ENCODE measurements at regions of chr2 and their contacts with region 1.

Region 1: GRCh38 chr2:142097711-142098110 is 33.1 kb downstream of the LRP1B start:
- DNase-seq: no peak
- ATAC-seq: no peak
- H3K4me3 ChIP-seq: no peak overlapping the region
- H3K27ac ChIP-seq: no peak overlapping the region
- H3K4me1 ChIP-seq: no peaks in the 10 kb centered on the region; a peak in 1 of 4 replicates
- H3K27me3 ChIP-seq: no peaks in the 10 kb centered on the region
- CTCF ChIP-seq: no peak
- POLR2A ChIP-seq: no peak
- RAD21 ChIP-seq: no peak

Region 2: GRCh38 chr2:141899740-141900139 is 198.0 kb before region 1 on chr2:
- CTCF ChIA-PET with region 1: no interaction called
- POLR2A ChIA-PET with region 1: no interaction called
- RAD21 ChIA-PET with region 1: no interaction called
- intact Hi-C with region 1: no loop called
- DNase-seq: no peak
- ATAC-seq: no peak
- H3K4me3 ChIP-seq: no peak overlapping the region
- H3K27ac ChIP-seq: no peak overlapping the region
- H3K4me1 ChIP-seq: no peaks in the 10 kb centered on the region
- H3K27me3 ChIP-seq: no peaks in the 10 kb centered on the region
- CTCF ChIP-seq: no peak
- POLR2A ChIP-seq: no peak
- RAD21 ChIP-seq: no peak

Region 3: GRCh38 chr2:141929331-141930252 is 168.1 kb before region 1 on chr2:
- CTCF ChIA-PET with region 1: no interaction called
- POLR2A ChIA-PET with region 1: no interaction called
- RAD21 ChIA-PET with region 1: no interaction called
- intact Hi-C with region 1: loop called (anchors 1 kb)
- DNase-seq: no peak
- ATAC-seq: no peak
- H3K4me3 ChIP-seq: no peak overlapping the region
- H3K27ac ChIP-seq: no peak overlapping the region
- H3K4me1 ChIP-seq: no peaks in the 10 kb centered on the region
- H3K27me3 ChIP-seq: no peaks in the 10 kb centered on the region
- CTCF ChIP-seq: no peak
- POLR2A ChIP-seq: no peak
- RAD21 ChIP-seq: no peak